ENCODE measurements at regions of chr1 and their contacts with region 1.

Region 1: GRCh38 chr1:227734856-227735538 is at the starts of genes JMJD4 and SNAP47:
- DNase-seq: peak; percentile 95
- ATAC-seq: peak; percentile 94
- H3K4me3 Mint-ChIP-seq: peak within 1 kb of the TSS; percentile 89
- H3K27ac Mint-ChIP-seq: peak within 1 kb of the TSS; percentile 86
- H3K4me1 Mint-ChIP-seq: peaks cover 25% of the 10 kb centered on the region
- H3K27me3 Mint-ChIP-seq: no peaks in the 10 kb centered on the region
- total RNA-seq, gene JMJD4: 14.4 to 18.1 TPM
- total RNA-seq, gene SNAP47: 30.3 to 31.2 TPM

Region 2: GRCh38 chr1:226882631-226883409 is 852.2 kb before region 1 on chr1:
- CTCF ChIA-PET with region 1: no interaction called
- POLR2A ChIA-PET with region 1: no interaction called
- intact Hi-C with region 1: loop called in 1 of 2 experiments (anchors 10 kb)
- DNase-seq: peak; percentile 54
- ATAC-seq: peak; percentile 92
- H3K4me3 Mint-ChIP-seq: peak overlapping the region; percentile 64
- H3K27ac Mint-ChIP-seq: peak overlapping the region; percentile 91
- H3K4me1 Mint-ChIP-seq: peaks cover 53% of the 10 kb centered on the region
- H3K27me3 Mint-ChIP-seq: no peaks in the 10 kb centered on the region

Region 3: DNA sequence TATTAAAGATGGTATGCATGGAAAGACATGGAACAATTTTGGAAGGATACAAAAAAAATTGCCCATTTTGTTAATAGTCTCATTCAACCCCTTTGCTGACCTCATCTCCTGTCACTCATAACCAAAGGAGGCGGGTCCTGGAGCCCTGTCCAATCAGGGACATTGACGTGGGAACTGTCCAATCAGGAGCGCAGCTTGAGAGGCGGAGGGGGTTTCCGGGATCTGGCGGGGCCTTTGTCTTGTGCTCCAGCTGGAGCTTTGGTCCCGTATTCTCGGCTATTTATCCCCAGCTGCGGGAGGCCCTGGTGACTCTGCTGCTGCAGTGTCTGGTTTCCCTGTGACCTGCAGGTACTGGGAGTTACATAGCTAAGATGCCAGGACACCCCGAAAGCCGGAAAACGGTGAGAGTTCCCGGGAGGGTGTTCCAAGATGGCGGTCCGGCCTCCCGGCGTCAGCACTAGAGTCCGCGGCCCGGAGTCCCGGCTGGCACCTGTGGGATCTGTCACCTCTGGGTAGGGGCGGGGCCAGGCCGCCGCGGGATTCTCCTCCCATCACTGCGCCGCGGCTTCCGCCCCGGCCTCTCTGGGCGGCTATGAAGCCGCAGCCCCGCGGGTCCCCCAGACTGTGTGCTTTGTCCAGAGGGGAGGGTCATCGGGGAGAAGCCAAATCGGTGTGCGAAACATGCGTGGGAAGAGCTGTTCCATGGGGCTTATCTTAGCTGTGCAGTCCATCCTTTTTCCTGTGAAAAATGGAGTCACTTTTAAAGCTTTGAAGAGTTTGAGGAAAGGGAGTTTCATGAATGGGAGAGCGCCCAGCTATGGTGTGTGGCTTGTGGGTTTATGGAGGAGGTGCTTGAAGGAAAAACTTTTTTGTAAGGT is 171.4 kb before region 1 on chr1 and contains the start of gene ZNF678:
- CTCF ChIA-PET with region 1: no interaction called
- POLR2A ChIA-PET with region 1: no interaction called
- intact Hi-C with region 1: loop called (anchors 1 to 10 kb)
- DNase-seq: peak; percentile 95
- ATAC-seq: peak; percentile 96
- H3K4me3 Mint-ChIP-seq: peak within 1 kb of the TSS; percentile 90
- H3K27ac Mint-ChIP-seq: peak within 1 kb of the TSS; percentile 93
- H3K4me1 Mint-ChIP-seq: peaks cover 34% of the 10 kb centered on the region
- H3K27me3 Mint-ChIP-seq: peaks cover 25% of the 10 kb centered on the region
- total RNA-seq, gene ZNF678: 7.0 to 7.7 TPM

Region 4: GRCh38 chr1:227762233-227762911 is 27.4 kb after region 1 on chr1:
- CTCF ChIA-PET with region 1: interaction called, 3 read pairs
- POLR2A ChIA-PET with region 1: interaction called, 4 read pairs
- intact Hi-C with region 1: loop called in 1 of 2 experiments (anchors 1 kb)
- DNase-seq: peak; percentile 93
- ATAC-seq: peak; percentile 72
- H3K4me3 Mint-ChIP-seq: no peak overlapping the region
- H3K27ac Mint-ChIP-seq: peak overlapping the region; percentile 8
- H3K4me1 Mint-ChIP-seq: peaks cover 90% of the 10 kb centered on the region
- H3K27me3 Mint-ChIP-seq: no peaks in the 10 kb centered on the region

Region 5: DNA sequence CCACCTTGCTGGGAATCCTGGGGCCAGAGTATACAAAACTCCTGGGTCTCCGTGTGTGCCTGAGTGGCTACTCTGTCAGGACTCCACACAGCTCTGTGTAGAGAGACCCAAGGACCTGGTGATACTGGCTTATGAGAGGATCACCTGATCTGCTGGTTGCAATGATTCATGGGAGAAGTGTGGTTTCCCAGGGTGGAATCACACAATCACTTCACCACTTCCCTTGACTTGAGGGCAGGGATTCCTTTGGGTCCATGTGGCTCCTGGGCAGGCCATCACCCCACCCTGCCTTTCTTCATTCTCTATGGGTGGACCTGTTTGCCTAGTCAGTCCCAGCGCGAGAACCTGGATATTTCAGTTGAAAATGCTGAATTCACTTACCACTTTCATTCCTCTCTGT is 93.8 kb after region 1 on chr1:
- CTCF ChIA-PET with region 1: no interaction called
- POLR2A ChIA-PET with region 1: no interaction called
- intact Hi-C with region 1: no loop called
- DNase-seq: no peak
- ATAC-seq: no peak
- H3K4me3 Mint-ChIP-seq: no peak overlapping the region
- H3K27ac Mint-ChIP-seq: no peak overlapping the region
- H3K4me1 Mint-ChIP-seq: peaks cover 7% of the 10 kb centered on the region
- H3K27me3 Mint-ChIP-seq: peaks cover 13% of the 10 kb centered on the region

Region 6: DNA sequence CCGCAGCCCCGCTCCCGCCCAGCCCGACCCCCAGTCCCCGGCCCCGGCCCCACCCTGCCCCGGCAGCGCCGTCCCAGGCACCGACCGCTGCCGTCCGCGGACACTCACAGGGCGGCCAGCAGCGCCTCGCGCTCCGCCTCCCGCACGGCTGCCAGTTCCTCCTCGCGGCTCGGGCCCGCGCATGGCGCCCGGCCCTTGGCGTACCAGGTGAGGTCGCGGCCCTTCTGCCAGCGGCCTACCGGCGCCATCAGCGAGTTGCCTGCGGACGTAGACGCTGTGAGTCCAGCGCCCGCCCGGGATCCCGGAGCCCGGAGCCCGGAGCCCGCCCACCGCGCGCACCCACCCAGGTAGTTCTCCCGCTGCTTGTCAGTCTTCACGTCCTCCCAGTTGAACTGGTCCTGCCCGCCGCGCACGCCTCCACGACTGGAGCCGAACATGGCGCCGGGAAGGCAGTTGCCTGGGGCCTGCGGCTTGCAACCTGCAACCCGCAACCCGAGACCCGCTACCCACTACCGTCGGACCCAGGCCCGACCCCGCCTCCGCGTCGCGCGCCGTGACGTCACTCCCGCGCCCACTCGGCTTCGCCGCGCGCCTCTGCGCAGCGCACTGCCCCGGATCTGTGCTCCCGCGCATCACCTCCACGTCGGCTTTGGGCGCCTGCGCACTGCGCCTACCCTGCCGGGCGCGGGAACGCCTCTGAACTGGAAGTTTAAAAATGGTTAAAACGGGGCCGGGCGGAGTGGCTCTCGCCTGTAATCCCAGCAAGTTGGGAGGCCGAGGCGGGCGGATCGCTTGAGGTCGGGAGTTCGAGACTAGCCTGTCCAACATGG is 368.0 kb after region 1 on chr1 and contains the start of gene C1orf35:
- CTCF ChIA-PET with region 1: no interaction called
- POLR2A ChIA-PET with region 1: no interaction called
- intact Hi-C with region 1: loop called in 1 of 2 experiments (anchors 2 kb)
- DNase-seq: peak; percentile 97
- ATAC-seq: peak; percentile 90
- H3K4me3 Mint-ChIP-seq: peak within 1 kb of the TSS; percentile 89
- H3K27ac Mint-ChIP-seq: peak within 1 kb of the TSS; percentile 91
- H3K4me1 Mint-ChIP-seq: peaks cover 22% of the 10 kb centered on the region
- H3K27me3 Mint-ChIP-seq: no peaks in the 10 kb centered on the region
- total RNA-seq, gene C1orf35: 14.6 to 22.5 TPM